ENCODE measurements at regions of chr2 and their contacts with region 1.

Region 1: DNA sequence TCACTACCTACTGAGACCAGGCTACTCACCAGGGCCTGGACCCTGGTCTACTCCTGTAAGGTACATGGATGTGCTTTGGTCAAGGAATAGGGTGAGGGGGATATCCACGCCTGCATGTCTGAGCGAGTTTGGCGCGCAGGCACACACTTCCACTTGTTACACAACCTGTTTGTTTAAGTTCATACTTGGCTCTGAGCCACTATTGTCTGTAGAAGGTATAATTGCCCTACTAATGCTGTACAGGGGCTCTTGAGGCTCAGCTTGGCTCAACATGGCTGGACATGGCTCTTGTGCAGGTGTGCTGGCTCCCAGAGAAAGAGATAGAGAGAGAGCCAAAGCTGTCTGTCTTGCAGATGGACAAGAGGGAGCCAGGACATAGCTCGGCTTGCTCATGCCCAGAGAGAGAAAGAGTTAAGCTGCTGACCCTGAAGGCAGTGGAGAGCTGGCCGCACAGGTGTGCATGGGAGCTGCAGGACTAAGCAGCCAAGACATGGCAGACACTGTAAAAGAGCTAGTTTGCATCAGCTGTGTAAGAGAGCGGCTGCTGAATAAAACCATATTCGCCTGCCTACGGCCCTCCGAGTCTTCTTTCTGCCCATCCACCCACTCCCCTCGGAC is 35.2 kb downstream of the NPPC start:
- DNase-seq: peak in 1 of 7 donors; percentile 5
- H3K4me3 ChIP-seq: no peak overlapping the region
- H3K27ac ChIP-seq: no peak overlapping the region
- H3K4me1 ChIP-seq: no peaks in the 10 kb centered on the region
- H3K27me3 ChIP-seq: no peaks in the 10 kb centered on the region
- CTCF ChIP-seq: no peak
- POLR2A ChIP-seq: no peak

Region 2: GRCh38 chr2:231810905-231811304 is 80.1 kb before region 1 on chr2:
- intact Hi-C with region 1: loop called in 1 of 2 experiments (anchors 10 kb)
- DNase-seq: peak in 2 of 7 donors; percentile 28 to 37
- H3K4me3 ChIP-seq: no peak overlapping the region
- H3K27ac ChIP-seq: no peak overlapping the region
- H3K4me1 ChIP-seq: peaks cover 0 to 7% of the 10 kb centered on the region in 2 donors
- H3K27me3 ChIP-seq: no peaks in the 10 kb centered on the region
- CTCF ChIP-seq: no peak
- POLR2A ChIP-seq: no peak